Right cardiac atrium (tissue), 5 donors: ENCODE measurements at regions of chr7 and their contacts with region 1.

Region 1: GRCh38 chr7:7535691-7536090 is at the start of gene COL28A1:
- DNase-seq: peak in 1 of 3 donors; percentile 66
- ATAC-seq: no peak
- H3K4me3 ChIP-seq: no peak within 1 kb of the TSS
- H3K27ac ChIP-seq: no peak within 1 kb of the TSS
- H3K4me1 ChIP-seq: no peaks in the 10 kb centered on the region
- H3K27me3 ChIP-seq: no peaks in the 10 kb centered on the region
- total RNA-seq, gene COL28A1: 3.8 to 5.8 (median 5.0) TPM

Region 2: GRCh38 chr7:7103343-7104313 is 432.1 kb before region 1 on chr7:
- intact Hi-C with region 1: loop called (anchors 5 kb)
- DNase-seq: peak in 2 of 3 donors; percentile 50 to 51
- ATAC-seq: peak; percentile 72 to 77
- H3K4me3 ChIP-seq: no peak overlapping the region
- H3K27ac ChIP-seq: no peak overlapping the region
- H3K4me1 ChIP-seq: peaks cover 2% of the 10 kb centered on the region
- H3K27me3 ChIP-seq: no peaks in the 10 kb centered on the region

Region 3: DNA sequence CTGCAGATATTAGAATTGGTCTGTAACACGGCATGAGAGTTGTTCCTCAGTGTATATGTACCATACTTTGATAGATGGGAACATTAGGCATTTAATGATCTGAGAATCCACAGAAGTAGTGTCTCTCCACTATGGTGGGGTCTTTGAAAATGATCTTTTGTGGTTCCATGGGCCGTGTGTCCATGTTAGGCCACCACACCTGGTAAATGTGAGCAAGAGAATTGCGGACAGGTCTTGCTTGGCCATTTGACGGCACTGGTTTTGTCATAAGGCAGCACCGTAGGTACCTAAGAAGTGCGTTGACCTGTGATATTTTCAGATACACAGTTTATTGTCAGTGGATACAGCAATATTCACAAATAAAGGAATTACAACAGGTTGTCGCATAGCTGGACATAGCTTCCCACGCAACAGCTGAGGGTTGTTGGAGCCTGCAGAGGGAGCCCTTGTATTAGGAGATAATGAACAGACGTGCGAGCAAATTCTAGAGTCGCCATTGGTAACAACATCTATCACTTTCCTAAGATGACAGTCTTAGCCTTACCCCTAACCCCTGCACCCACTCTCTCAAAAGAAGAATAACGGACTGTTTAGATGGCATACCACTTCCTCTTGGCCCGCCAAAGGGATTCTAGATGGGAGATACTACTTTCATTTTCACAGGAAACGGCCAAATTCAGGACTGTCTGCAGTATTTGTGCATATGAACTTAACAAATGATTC is 111.4 kb before region 1 on chr7:
- intact Hi-C with region 1: loop called (anchors 5 to 10 kb)
- DNase-seq: peak; percentile 34 to 77 (median 60)
- ATAC-seq: peak; percentile 92
- H3K4me3 ChIP-seq: peak overlapping the region; percentile 93
- H3K27ac ChIP-seq: no peak overlapping the region
- H3K4me1 ChIP-seq: no peaks in the 10 kb centered on the region
- H3K27me3 ChIP-seq: no peaks in the 10 kb centered on the region